HepG2 (cell line): ENCODE measurements at regions of chr22 and their contacts with region 1.

Region 1: DNA sequence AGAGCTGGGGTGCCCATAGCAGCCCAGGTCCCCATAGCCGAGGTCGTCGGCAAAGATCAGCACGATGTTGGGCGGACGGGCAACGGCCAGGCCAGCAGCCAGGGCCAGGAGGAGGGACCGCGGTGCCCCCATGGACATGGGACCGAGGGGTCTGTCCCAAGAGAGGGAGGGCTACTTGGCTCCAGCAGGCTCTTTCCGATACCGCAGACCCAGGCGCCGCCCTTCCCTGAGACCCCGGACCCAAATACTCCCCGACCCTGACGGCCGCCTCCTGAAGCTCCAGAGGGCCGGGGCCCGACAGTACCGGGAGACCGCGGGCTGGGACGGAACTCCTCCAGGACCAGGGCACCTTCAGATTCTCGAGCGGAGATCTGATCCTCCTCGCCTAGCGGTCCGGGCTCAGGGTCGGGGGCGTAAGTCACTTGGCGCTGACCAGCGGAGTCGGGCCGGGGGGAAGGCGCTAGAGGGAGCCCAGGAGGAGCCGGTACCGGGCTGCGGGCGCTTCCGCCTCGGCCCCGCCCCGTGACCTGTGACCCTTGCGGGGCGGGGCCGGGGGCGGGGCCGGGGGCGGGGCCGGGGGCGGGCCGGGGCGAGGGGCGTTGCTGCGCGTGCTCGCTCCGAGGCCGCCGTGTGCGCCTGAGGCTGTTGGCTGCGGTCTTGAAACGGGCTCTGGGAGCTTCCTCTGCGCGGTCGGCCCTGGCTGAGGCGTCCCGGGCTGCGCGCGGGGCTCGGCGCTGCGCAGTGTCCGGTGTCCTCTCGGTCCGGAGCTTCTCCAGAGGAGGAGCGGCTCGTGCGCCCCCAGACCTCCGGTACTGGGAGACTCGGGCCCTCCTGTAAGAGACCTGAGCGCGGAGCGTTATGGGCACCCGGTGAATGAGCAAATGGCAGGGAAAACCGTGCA is at the start of gene ARSA:
- DNase-seq: peak; percentile 70
- ATAC-seq: peak; percentile 89
- H3K4me3 ChIP-seq: peak within 1 kb of the TSS; percentile 68 to 88 (median 86)
- H3K27ac ChIP-seq: peak within 1 kb of the TSS; percentile 79
- H3K4me1 ChIP-seq: peaks cover 41% of the 10 kb centered on the region
- H3K27me3 ChIP-seq: no peaks in the 10 kb centered on the region; a peak in 1 of 5 replicates
- CTCF ChIP-seq: peak; percentile 81
- EP300 ChIP-seq: no peak
- POLR2A ChIP-seq: peak; percentile 79 to 92
- RAD21 ChIP-seq: peak; percentile 63
- total RNA-seq, gene ARSA: 3.8 and 9.0 TPM in 2 replicates

Region 2: DNA sequence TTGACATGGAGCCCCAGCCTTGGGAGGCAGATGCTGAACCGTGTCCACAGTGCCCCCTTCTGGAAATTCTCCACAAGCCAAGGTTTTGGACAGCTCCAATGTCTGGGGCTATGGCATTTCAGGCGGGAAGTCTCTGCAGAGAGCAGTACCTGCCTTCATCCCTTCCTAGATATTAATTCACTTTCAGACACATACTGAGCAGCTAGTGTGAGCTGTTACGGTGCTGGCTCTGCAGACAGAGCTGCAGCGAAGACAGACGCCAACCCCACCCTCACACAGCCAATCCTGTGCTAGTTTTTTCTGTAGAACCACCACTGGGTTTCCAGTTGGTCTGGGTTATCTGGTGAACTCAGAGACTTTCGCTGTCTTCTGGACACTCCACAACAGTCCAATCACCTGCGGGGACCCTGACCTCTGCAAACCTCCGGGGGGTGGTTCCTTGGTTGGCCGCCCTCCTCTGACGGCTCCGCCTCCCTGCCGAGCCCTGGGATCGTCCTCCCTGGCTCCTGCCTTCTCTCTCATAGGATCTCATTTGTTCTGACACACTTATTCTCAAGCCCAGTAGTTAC is 129.5 kb before region 1 on chr22:
- CTCF ChIA-PET with region 1: no interaction called
- POLR2A ChIA-PET with region 1: no interaction called
- in situ Hi-C with region 1: no loop called
- intact Hi-C with region 1: no loop called
- DNase-seq: peak; percentile 80
- ATAC-seq: peak; percentile 93
- H3K4me3 ChIP-seq: peak overlapping the region in 1 of 3 experiments; percentile 33; a peak in 2 of 6 replicates
- H3K27ac ChIP-seq: peak overlapping the region; percentile 61
- H3K4me1 ChIP-seq: peaks cover 32% of the 10 kb centered on the region
- H3K27me3 ChIP-seq: no peaks in the 10 kb centered on the region
- CTCF ChIP-seq: peak; percentile 90
- EP300 ChIP-seq: no peak
- POLR2A ChIP-seq: no peak
- RAD21 ChIP-seq: peak; percentile 55

Region 3: DNA sequence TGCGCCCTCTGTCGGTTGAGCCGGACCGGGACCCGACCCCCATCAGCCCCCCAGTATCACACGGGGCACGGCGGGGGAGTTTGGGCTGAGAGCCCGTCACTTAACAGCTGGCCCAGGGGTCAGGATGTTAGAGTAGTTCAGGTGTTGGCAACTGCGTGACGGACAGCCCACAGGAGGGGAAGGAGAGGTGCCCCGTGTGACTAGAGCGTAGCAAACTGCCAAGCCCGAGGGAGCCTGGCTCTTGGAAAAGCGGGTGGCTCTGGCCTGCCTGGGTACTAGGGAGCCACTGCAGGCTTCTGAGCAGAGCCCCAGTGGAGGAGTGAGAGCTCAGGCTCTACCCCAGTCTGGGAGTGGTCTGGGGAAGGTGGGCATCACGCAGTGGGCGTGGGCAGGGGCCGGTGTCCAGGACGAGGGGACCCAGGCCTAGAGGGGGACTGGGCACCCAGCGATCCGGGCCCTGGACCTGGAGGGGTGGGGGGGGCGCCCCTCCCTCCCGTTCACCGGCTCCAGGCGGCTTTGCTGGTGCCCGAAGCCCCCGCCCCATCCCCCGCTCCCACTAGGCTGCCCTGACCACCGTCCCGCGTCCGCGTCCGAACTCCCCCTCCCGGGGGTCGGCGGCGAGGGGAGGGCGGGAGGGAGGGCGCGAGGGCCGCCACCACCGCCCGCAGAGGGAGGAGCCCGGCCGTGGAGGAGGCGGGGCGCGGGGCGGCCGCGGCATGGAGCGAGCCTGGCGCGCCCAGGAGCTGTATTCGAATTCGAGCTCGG is 69.1 kb after region 1 on chr22:
- CTCF ChIA-PET with region 1: interaction called, 16 read pairs
- POLR2A ChIA-PET with region 1: interaction called, 13 read pairs
- in situ Hi-C with region 1: loop called (anchors 5 kb)
- intact Hi-C with region 1: no loop called
- DNase-seq: no peak
- ATAC-seq: no peak
- H3K4me3 ChIP-seq: peak overlapping the region in 2 of 3 experiments; percentile 82 to 89; a peak in 3 of 6 replicates
- H3K27ac ChIP-seq: no peak overlapping the region
- H3K4me1 ChIP-seq: peaks cover 42% of the 10 kb centered on the region
- H3K27me3 ChIP-seq: no peaks in the 10 kb centered on the region
- CTCF ChIP-seq: no peak
- EP300 ChIP-seq: no peak
- POLR2A ChIP-seq: no peak
- RAD21 ChIP-seq: no peak

Region 4: DNA sequence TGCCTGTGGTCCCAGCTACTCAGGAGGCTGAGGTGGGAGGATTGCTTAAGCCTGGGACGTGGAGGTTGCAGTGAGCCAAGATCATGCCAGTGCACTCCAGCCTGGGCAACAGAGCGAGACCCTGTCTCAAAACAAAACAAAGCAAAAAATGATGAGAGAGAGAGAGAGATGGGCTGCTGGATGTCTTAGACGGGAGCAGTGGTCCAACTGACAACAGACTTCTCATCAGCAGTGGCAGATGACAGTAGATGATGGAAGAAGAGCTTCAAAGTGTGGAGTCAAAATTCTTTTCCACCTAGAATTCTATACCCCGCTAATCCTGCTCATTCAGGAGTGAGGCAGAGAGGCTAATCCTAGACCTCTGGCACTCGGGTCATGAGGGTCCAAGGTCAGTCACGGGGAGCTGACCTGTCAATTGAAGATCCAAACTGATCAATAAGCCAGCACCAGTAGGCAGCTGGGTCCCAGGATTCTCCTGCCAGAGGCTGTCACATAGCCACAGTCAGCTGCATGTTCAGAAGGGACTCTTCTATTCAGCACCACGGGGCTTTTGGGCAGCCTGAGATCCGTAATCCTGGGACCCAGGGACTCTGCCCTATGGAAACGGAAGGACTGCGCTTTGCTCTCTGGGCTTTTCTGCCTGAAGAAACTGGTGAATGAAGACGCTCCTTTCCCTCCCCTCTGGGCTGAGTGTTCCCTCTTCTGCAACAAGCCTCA is 81.3 kb after region 1 on chr22:
- CTCF ChIA-PET with region 1: no interaction called
- POLR2A ChIA-PET with region 1: no interaction called
- in situ Hi-C with region 1: no loop called
- intact Hi-C with region 1: no loop called
- DNase-seq: no peak
- ATAC-seq: no peak; the same call in 2 of the 3 replicates
- H3K4me3 ChIP-seq: no peak overlapping the region
- H3K27ac ChIP-seq: peak overlapping the region; percentile 21
- H3K4me1 ChIP-seq: peaks cover 13% of the 10 kb centered on the region; the same call in 1 of the 2 replicates
- H3K27me3 ChIP-seq: no peaks in the 10 kb centered on the region
- CTCF ChIP-seq: no peak
- EP300 ChIP-seq: no peak
- POLR2A ChIP-seq: no peak
- RAD21 ChIP-seq: no peak